AG04450 (cell line): ENCODE measurements at regions of chr2 and their contacts with region 1.

Region 1: GRCh38 chr2:159381574-159381973 is 95.1 kb upstream of the WDSUB1 start:
- DNase-seq: no peak
- H3K4me3 ChIP-seq: no peak overlapping the region
- H3K27ac ChIP-seq: no peak overlapping the region
- H3K27me3 ChIP-seq: no peaks in the 10 kb centered on the region
- CTCF ChIP-seq: no peak

Region 2: DNA sequence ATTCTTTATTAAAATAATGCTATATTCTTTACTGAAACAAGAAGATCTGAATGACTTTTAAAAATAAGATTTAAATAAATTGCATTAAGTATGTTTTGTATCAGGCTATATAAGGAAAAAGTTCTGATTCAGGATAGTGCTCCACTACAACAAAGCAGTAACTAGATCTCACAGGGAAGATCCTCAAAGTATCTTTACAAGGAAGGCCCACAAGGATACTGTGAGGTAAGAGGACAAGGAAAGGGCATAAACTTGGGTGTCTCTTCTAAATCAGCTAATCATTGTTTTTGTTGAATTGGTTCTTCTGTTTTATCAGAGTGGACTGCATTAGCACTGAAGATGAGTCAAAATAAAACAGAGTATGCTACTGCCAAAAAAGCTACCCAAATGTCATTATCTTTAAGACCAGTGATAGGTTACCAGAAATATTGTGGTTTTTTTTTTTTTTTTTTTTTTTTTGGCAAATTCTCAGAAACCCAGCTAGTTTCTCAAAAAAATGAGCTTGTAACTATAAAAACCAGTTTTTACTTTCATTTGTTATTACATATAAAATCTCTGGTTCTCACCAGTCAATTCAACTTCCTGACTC is 73.8 kb after region 1 on chr2:
- CTCF ChIA-PET with region 1: interaction called, 18 read pairs
- POLR2A ChIA-PET with region 1: no interaction called
- DNase-seq: no peak
- H3K4me3 ChIP-seq: no peak overlapping the region
- H3K27ac ChIP-seq: no peak overlapping the region
- H3K27me3 ChIP-seq: no peaks in the 10 kb centered on the region
- CTCF ChIP-seq: no peak